GM10248 (cell line): ENCODE measurements at regions of chr7 and their contacts with region 1.

Region 1: GRCh38 chr7:28921822-28922221 is 36.3 kb downstream of the TRIL start:
- DNase-seq: peak; percentile 42
- CTCF ChIP-seq: peak; percentile 75

Region 2: DNA sequence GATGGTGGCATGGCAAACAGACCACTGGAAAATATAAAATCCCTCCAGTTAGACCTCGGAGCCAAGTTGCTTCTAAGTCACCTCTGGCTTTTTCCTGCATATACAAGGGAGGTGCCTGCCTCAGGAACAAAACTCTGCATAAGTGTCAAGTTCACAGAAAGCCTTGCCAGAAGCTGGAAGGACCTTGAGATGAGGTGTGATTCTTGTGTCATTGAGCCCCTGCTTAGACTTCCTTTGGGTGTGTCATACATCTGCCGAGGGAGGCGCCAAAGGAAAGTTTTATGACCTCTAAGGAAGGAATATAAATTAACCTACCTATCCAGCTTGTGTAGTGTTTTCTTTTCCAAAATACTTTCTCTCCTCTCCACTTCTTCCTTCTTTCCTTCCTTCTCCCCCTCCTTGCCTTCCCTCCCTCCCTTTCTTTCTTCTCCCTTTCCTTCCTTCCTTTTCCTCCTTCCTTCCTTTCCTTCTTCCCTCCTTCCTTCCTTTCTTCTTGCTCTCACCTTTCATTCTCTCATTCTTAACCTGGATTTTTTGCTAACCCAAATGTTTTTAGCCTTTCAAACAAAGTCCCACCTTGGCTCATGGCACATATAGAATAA is 38.9 kb before region 1 on chr7:
- CTCF ChIA-PET with region 1: interaction called, 13 read pairs
- POLR2A ChIA-PET with region 1: no interaction called
- DNase-seq: no peak
- CTCF ChIP-seq: no peak

Region 3: DNA sequence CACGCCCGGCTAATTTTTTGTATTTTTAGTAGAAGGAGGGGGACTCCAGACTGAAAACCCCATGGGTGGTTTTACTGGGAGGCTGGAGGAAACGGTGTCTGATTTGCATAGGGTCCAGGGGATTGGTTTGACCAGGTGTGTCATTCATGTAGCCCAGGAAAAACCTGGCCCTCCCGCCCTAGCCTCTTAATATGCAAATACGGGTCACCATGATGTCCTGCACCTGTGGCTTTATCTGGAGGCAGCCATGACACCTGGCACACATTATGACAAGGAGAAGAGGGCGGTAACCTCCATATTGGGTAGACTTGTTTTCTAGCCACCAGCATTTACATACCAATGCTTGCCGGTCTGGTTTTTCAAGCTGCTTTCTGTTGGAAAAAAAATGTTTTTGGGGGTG is 31.7 kb before region 1 on chr7:
- CTCF ChIA-PET with region 1: interaction called, 10 read pairs
- POLR2A ChIA-PET with region 1: no interaction called
- DNase-seq: no peak
- CTCF ChIP-seq: no peak

Region 4: GRCh38 chr7:29091715-29092114 is 169.9 kb after region 1 on chr7:
- CTCF ChIA-PET with region 1: interaction called, 416 read pairs
- POLR2A ChIA-PET with region 1: no interaction called
- DNase-seq: peak; percentile 81
- CTCF ChIP-seq: no peak

Region 5: GRCh38 chr7:29113384-29114103 is 191.7 kb after region 1 on chr7:
- CTCF ChIA-PET with region 1: interaction called, 416 read pairs
- POLR2A ChIA-PET with region 1: no interaction called
- DNase-seq: no peak
- CTCF ChIP-seq: peak; percentile 27

Region 6: GRCh38 chr7:29130096-29130495 is 208.3 kb after region 1 on chr7:
- CTCF ChIA-PET with region 1: interaction called, 11 read pairs
- POLR2A ChIA-PET with region 1: no interaction called
- DNase-seq: no peak
- CTCF ChIP-seq: no peak

Region 7: GRCh38 chr7:29408841-29409243 is 487.0 kb after region 1 on chr7:
- CTCF ChIA-PET with region 1: interaction called, 130 read pairs
- POLR2A ChIA-PET with region 1: no interaction called
- DNase-seq: peak; percentile 66
- CTCF ChIP-seq: peak; percentile 83